ENCODE measurements at regions of chr20 and their contacts with region 1.

Region 1: GRCh38 chr20:32302507-32302872 is 25.0 kb downstream of the KIF3B start:
- DNase-seq: no peak
- ATAC-seq: no peak
- H3K4me3 ChIP-seq: no peak overlapping the region
- H3K27ac ChIP-seq: no peak overlapping the region
- H3K4me1 ChIP-seq: no peaks in the 10 kb centered on the region
- H3K27me3 ChIP-seq: no peaks in the 10 kb centered on the region
- CTCF ChIP-seq: no peak

Region 2: GRCh38 chr20:32291166-32291565 is 11.3 kb before region 1 on chr20:
- CTCF ChIA-PET with region 1: interaction called, 12 read pairs
- POLR2A ChIA-PET with region 1: no interaction called
- intact Hi-C with region 1: no loop called
- DNase-seq: no peak
- ATAC-seq: no peak
- H3K4me3 ChIP-seq: no peak overlapping the region
- H3K27ac ChIP-seq: no peak overlapping the region
- H3K4me1 ChIP-seq: no peaks in the 10 kb centered on the region
- H3K27me3 ChIP-seq: no peaks in the 10 kb centered on the region
- CTCF ChIP-seq: no peak